CD14-positive monocyte (primary cell): ENCODE measurements at regions of chr9 and their contacts with region 1.

Region 1: DNA sequence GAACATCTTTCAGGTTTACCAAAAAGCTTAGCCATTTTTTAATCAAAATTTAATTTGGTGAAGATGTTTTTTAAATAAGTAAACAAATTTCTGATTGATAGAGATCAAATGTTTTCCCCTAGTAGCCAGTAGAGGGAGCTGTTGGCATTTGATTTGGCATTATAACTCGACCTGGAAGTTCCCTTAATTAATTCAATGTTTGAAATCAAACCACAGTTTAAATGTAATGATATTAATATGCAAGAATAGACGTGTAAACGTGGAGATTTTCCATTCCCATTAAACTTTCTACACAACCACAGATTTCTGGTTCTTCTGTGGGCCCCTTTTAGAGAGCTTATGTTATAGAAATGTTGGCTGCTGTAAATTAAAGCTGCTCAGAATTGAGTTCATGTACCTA is 148.1 kb upstream of the MPDZ start:
- DNase-seq: peak in 2 of 3 donors; percentile 2 to 12
- H3K4me3 ChIP-seq: no peak overlapping the region
- H3K4me3 Mint-ChIP-seq: no peak overlapping the region
- H3K27ac ChIP-seq: no peak overlapping the region
- H3K27ac Mint-ChIP-seq: no peak overlapping the region
- H3K4me1 ChIP-seq: no peaks in the 10 kb centered on the region
- H3K4me1 Mint-ChIP-seq: no peaks in the 10 kb centered on the region
- H3K27me3 ChIP-seq: no peaks in the 10 kb centered on the region
- H3K27me3 Mint-ChIP-seq: peaks cover 1 to 3% (median 2%) of the 10 kb centered on the region in 3 donors
- CTCF ChIP-seq: peak; percentile 77

Region 2: GRCh38 chr9:14353222-14354056 is 925.9 kb after region 1 on chr9:
- intact Hi-C with region 1: loop called (anchors 5 kb)
- DNase-seq: peak; percentile 11 to 40 (median 22)
- H3K4me3 ChIP-seq: no peak overlapping the region
- H3K4me3 Mint-ChIP-seq: peak overlapping the region in 1 of 2 donors; percentile 36
- H3K27ac ChIP-seq: no peak overlapping the region
- H3K27ac Mint-ChIP-seq: no peak overlapping the region
- H3K4me1 ChIP-seq: no peaks in the 10 kb centered on the region
- H3K4me1 Mint-ChIP-seq: peaks cover 2% of the 10 kb centered on the region
- H3K27me3 ChIP-seq: peaks cover 29 to 51% of the 10 kb centered on the region in 2 donors
- H3K27me3 Mint-ChIP-seq: peaks cover 17 to 35% (median 18%) of the 10 kb centered on the region in 3 donors
- CTCF ChIP-seq: peak; percentile 69